Adrenal gland (tissue), 19 donors: ENCODE measurements at regions of chr3 and their contacts with region 1.

Region 1: DNA sequence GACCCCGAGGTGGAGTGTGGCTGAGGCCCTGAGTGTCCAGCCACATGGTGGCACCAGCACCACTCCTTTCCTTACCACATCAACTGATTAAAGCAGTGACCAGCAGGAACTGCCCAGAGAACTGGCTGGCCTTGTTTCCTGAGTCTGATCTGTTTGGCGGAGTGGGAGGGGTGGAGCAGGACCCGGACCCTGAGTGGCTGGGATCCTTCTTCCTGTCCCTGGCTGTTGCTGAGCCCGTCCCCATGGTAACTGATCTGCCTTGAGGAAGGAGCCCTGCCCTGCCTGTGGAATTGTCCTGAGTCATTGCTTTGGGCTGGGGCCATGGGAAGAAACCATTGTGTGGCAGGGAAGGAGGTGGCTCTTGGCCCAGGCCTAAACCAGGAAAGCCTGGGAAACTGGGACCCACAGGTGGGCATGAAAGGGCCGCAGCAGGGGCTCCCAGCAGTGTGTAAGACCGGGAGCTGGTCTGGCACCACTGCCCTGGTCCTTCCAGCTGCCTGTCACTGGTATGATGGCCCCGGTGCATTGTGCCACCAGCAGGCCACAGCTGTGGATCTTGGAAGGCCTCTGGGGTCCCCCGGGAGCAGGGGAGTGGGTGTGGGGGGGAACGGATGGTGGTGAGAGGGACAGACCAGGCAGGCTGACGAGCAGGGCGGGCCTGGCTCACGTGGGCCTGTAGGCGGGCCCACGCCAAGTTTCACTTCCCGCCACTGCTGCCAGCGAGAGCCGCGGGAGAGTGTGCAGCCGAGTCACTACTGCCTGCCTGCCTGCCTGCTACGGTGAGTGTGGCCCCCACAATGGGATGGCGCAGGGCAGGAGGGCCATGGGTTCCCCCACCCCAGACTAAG is 19.2 kb downstream of the ATRIP start:
- DNase-seq: peak; percentile 97 to 100 (median 100)
- H3K4me3 ChIP-seq: peak overlapping the region; percentile 2 to 72 (median 53)
- H3K27ac ChIP-seq: peak overlapping the region; percentile 98 to 100 (median 100)
- H3K4me1 ChIP-seq: peaks cover 27 to 54% of the 10 kb centered on the region in 2 donors
- H3K27me3 ChIP-seq: no peaks in the 10 kb centered on the region
- CTCF ChIP-seq: peak; percentile 40 to 95 (median 85)
- POLR2A ChIP-seq: peak; percentile 31 to 93

Region 2: GRCh38 chr3:48504051-48504946 is 38.5 kb after region 1 on chr3 and contains the start of gene SHISA5:
- intact Hi-C with region 1: loop called in 1 of 2 experiments (anchors 5 kb)
- DNase-seq: peak; percentile 71 to 89 (median 81)
- H3K4me3 ChIP-seq: peak within 1 kb of the TSS; percentile 48 to 72 (median 63)
- H3K27ac ChIP-seq: peak within 1 kb of the TSS; percentile 53 to 95 (median 75)
- H3K4me1 ChIP-seq: peaks cover 5 to 21% of the 10 kb centered on the region in 2 donors
- H3K27me3 ChIP-seq: no peaks in the 10 kb centered on the region
- CTCF ChIP-seq: no peak
- POLR2A ChIP-seq: peak in 1 of 2 donors; percentile 26
- total RNA-seq, gene SHISA5: 110 to 167 (median 135) TPM

Region 3: DNA sequence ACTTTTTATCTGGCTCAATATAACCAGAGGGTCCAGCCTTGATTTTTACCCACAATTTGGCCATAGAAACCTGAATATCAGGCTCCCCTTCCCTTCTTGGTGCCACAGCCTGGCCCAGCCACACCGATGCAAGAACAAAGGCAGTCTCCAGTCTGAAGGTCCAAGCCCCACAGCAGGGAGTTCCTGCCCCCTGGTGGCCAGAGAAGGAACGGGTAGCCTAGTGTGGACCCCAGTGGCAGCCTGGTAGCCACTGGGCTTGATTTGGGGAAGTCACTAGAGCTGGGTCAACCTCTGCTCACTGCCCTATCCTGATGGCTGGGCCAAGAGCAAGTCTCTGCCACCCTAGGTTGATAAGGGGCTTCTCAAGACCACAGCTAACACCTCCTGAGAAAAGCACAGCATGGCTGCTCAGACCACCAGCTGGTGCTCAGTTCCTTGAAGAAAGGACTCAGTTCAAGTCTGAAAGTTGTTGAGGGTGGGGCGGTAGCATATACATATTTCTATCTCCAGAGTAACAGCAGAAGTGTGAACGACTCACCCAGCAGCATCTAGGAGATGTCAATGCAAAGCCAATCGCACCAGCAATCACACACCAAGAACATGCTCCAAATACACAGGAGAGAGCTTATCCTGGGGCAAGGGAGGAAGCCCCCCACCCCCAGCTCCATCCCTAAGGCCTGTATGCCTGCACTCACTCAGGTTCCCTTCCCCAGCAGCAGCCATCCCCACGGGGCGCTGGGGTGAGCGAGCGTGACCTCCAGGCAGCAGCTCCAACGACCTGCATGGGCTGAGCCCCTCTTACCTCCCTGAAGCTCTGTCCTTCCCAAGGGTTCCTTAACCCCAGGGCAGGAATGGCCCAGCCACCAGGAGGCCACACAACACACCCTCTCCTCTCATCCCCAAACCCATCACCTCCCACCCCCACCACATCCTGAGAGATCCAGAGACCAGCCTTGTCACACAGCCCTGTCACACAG is 83.3 kb after region 1 on chr3:
- intact Hi-C with region 1: loop called (anchors 2 to 5 kb)
- DNase-seq: peak; percentile 86 to 95 (median 88)
- H3K4me3 ChIP-seq: no peak overlapping the region
- H3K27ac ChIP-seq: no peak overlapping the region
- H3K4me1 ChIP-seq: no peaks in the 10 kb centered on the region
- H3K27me3 ChIP-seq: no peaks in the 10 kb centered on the region
- CTCF ChIP-seq: peak; percentile 95 to 98 (median 96)
- POLR2A ChIP-seq: no peak

Region 4: GRCh38 chr3:48859206-48859605 is 393.5 kb after region 1 on chr3:
- intact Hi-C with region 1: no loop called
- DNase-seq: no peak
- H3K4me3 ChIP-seq: no peak overlapping the region
- H3K27ac ChIP-seq: no peak overlapping the region
- H3K4me1 ChIP-seq: no peaks in the 10 kb centered on the region
- H3K27me3 ChIP-seq: no peaks in the 10 kb centered on the region
- CTCF ChIP-seq: no peak
- POLR2A ChIP-seq: no peak

Region 5: GRCh38 chr3:48938156-48938555 is 472.4 kb after region 1 on chr3:
- intact Hi-C with region 1: no loop called
- DNase-seq: no peak
- H3K4me3 ChIP-seq: no peak overlapping the region
- H3K27ac ChIP-seq: no peak overlapping the region
- H3K4me1 ChIP-seq: peaks cover 0 to 10% of the 10 kb centered on the region in 2 donors
- H3K27me3 ChIP-seq: no peaks in the 10 kb centered on the region
- CTCF ChIP-seq: no peak
- POLR2A ChIP-seq: no peak